ENCODE measurements at regions of chr19 and their contacts with region 1.

Region 1: GRCh38 chr19:38658462-38659306 is 11.2 kb downstream of the ACTN4 start:
- DNase-seq: no peak
- ATAC-seq: no peak
- H3K4me3 Mint-ChIP-seq: no peak overlapping the region
- H3K27ac Mint-ChIP-seq: no peak overlapping the region
- H3K4me1 Mint-ChIP-seq: peaks cover 69% of the 10 kb centered on the region
- H3K27me3 Mint-ChIP-seq: peaks cover 3% of the 10 kb centered on the region

Region 2: GRCh38 chr19:37706052-37706605 is 952.6 kb before region 1 on chr19:
- CTCF ChIA-PET with region 1: no interaction called
- POLR2A ChIA-PET with region 1: no interaction called
- intact Hi-C with region 1: no loop called
- DNase-seq: no peak
- ATAC-seq: no peak
- H3K4me3 Mint-ChIP-seq: no peak overlapping the region
- H3K27ac Mint-ChIP-seq: no peak overlapping the region
- H3K4me1 Mint-ChIP-seq: peaks cover 3% of the 10 kb centered on the region
- H3K27me3 Mint-ChIP-seq: no peaks in the 10 kb centered on the region

Region 3: GRCh38 chr19:38538793-38539528 is 119.7 kb before region 1 on chr19:
- CTCF ChIA-PET with region 1: interaction called, 3 read pairs
- POLR2A ChIA-PET with region 1: no interaction called
- intact Hi-C with region 1: loop called in 1 of 2 experiments (anchors 1 kb)
- DNase-seq: peak; percentile 49
- ATAC-seq: peak; percentile 87
- H3K4me3 Mint-ChIP-seq: peak overlapping the region; percentile 36
- H3K27ac Mint-ChIP-seq: peak overlapping the region; percentile 89
- H3K4me1 Mint-ChIP-seq: peaks cover 41% of the 10 kb centered on the region
- H3K27me3 Mint-ChIP-seq: no peaks in the 10 kb centered on the region

Region 4: DNA sequence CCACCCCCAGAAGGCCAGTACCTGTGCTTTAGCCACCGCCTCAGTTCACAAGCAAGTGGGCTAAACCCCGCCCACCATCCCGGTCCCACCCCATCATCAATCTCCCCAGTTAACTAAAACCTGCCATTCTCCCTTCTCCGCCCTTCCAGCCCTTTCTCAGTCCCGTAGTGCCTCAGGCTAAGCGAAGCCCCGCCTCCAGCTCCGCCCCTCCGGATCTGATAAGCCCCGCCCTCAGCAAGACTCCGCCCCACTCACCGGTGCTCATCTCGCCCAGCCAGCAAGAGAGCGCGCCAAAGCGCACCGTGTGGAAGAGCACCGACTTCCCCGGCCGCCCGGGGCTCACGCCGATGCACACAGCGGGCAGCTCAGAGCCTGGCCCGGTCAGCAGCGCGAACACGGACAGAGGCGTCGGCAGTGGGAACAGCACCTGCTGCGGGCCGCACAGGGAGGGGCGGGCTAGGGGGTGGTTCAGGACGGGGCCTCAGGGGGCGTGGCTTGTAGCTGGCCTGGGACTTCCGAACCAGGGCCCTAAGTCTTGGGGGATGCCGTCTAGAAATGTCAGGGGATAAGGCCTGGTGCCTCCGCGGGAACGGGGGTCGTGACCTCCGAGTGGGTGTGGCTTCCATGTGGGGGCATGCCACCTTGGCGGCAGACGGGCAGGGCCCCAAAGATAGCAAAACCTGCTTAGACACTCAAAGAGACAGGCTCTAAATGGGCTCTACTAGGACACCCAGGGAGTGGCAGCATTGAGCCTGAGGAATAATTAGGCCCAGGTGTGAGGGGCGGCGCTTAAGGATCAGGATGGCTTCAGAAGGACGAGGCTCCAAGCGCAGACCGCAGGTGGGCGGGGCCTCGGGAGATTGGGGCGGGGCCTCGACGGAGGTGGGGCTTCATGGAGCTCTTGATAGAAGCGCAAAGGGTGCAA is 62.4 kb before region 1 on chr19:
- CTCF ChIA-PET with region 1: no interaction called
- POLR2A ChIA-PET with region 1: no interaction called
- intact Hi-C with region 1: no loop called
- DNase-seq: peak; percentile 57
- ATAC-seq: peak; percentile 80
- H3K4me3 Mint-ChIP-seq: no peak overlapping the region
- H3K27ac Mint-ChIP-seq: no peak overlapping the region
- H3K4me1 Mint-ChIP-seq: no peaks in the 10 kb centered on the region
- H3K27me3 Mint-ChIP-seq: no peaks in the 10 kb centered on the region

Region 5: GRCh38 chr19:38647368-38647965 is 11.2 kb before region 1 on chr19 and contains the start of gene ACTN4:
- CTCF ChIA-PET with region 1: interaction called, 9 read pairs
- POLR2A ChIA-PET with region 1: interaction called, 7 read pairs
- intact Hi-C with region 1: loop called in 1 of 2 experiments (anchors 1 kb)
- DNase-seq: peak; percentile 100
- ATAC-seq: peak; percentile 92
- H3K4me3 Mint-ChIP-seq: peak within 1 kb of the TSS; percentile 98
- H3K27ac Mint-ChIP-seq: peak within 1 kb of the TSS; percentile 81
- H3K4me1 Mint-ChIP-seq: peaks cover 39% of the 10 kb centered on the region
- H3K27me3 Mint-ChIP-seq: peaks cover 10% of the 10 kb centered on the region
- total RNA-seq, gene ACTN4: 181 to 182 TPM

Region 6: DNA sequence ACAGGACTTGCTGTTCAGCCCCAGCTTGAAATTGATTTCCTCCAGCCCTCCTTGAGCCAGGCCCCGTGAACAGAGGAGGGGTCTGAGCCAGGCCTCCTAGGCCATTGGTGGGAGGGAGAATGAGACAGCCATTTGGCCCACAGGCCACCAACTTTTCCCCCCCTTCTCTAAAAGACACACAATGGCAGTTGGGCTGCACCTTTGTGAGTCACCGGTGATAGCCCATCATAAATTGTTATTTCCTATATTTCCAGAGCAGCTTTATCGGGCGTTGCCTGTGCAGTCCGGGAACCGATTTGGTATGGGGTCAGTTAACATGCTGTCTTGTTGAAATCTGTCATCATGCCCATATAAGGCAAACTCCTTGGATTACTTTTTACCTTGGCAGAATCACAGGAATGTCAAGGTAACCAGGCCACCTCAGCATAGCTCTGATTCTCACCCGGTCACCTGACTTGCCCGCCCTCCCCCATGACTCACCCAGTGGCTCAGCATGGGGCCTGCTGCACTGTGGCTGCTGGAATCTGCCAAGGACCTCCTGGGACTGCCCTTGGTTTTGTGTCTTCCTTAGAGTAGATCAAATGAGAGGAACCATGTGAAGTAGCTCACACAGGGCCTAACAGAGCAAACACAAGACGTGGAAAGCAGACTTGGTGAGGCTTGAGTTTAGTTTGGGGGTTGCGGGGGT is 24.9 kb after region 1 on chr19:
- CTCF ChIA-PET with region 1: interaction called, 3 read pairs
- POLR2A ChIA-PET with region 1: interaction called, 3 read pairs
- intact Hi-C with region 1: loop called (anchors 2 kb)
- DNase-seq: peak; percentile 75
- ATAC-seq: peak; percentile 61
- H3K4me3 Mint-ChIP-seq: no peak overlapping the region
- H3K27ac Mint-ChIP-seq: peak overlapping the region; percentile 80
- H3K4me1 Mint-ChIP-seq: peaks cover 76% of the 10 kb centered on the region
- H3K27me3 Mint-ChIP-seq: no peaks in the 10 kb centered on the region

Region 7: GRCh38 chr19:39631178-39631577 is 972.5 kb after region 1 on chr19:
- CTCF ChIA-PET with region 1: no interaction called
- POLR2A ChIA-PET with region 1: no interaction called
- intact Hi-C with region 1: no loop called
- DNase-seq: no peak
- ATAC-seq: no peak
- H3K4me3 Mint-ChIP-seq: no peak overlapping the region
- H3K27ac Mint-ChIP-seq: no peak overlapping the region
- H3K4me1 Mint-ChIP-seq: peaks cover under 1% of the 10 kb centered on the region
- H3K27me3 Mint-ChIP-seq: peaks cover 25% of the 10 kb centered on the region

Measured in activated CD4-positive, alpha-beta T cell treated with anti-CD3 and anti-CD28 coated beads for 36 hours (primary cell).